ENCODE measurements at regions of chr7 and their contacts with region 1.

Region 1: DNA sequence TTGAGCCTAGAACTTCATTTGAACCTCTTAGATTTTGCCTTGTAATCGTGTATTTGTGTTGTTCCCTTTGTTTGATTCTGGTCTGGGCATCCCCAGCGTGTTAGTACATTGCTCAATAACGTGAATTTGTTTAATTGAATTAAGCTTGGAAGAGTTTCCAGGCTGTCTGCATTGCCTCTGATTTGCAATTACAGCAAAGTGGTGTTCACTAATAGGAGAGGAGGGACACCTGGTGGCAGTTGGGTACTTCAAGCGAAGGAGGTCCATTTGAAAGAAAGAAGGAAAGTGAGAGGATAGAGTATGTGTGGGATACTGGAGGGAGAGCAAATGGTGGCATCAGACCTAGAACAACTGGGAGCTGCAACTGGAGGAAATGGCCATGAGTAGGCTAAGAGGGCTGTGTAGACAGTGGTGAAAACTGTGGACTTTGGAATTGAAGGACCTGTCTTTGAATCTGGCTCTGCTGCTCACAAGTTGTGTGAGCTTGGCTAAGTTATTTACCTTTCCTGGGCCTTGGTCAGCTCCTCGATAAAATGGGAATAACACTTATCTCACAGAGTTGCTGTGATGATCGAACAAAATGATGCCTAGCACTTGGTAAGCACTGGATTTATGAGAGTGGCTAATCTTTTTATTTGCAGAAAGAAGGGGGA is 15.1 kb downstream of the LSMEM1 start:
- DNase-seq: peak in 2 of 3 donors; percentile 31 to 36
- H3K4me3 ChIP-seq: no peak overlapping the region
- H3K4me3 Mint-ChIP-seq: no peak overlapping the region
- H3K27ac ChIP-seq: no peak overlapping the region
- H3K27ac Mint-ChIP-seq: no peak overlapping the region
- H3K4me1 ChIP-seq: no peaks in the 10 kb centered on the region
- H3K4me1 Mint-ChIP-seq: peaks cover 5% of the 10 kb centered on the region
- H3K27me3 ChIP-seq: no peaks in the 10 kb centered on the region
- H3K27me3 Mint-ChIP-seq: peaks cover 3 to 10% (median 5%) of the 10 kb centered on the region in 3 donors
- CTCF ChIP-seq: peak; percentile 51

Region 2: GRCh38 chr7:111741811-111742240 is 754.1 kb before region 1 on chr7:
- intact Hi-C with region 1: loop called in 1 of 2 experiments (anchors 10 kb)
- DNase-seq: peak; percentile 18 to 46 (median 42)
- H3K4me3 ChIP-seq: no peak overlapping the region
- H3K4me3 Mint-ChIP-seq: no peak overlapping the region
- H3K27ac ChIP-seq: no peak overlapping the region
- H3K27ac Mint-ChIP-seq: no peak overlapping the region
- H3K4me1 ChIP-seq: no peaks in the 10 kb centered on the region
- H3K4me1 Mint-ChIP-seq: peaks cover 3% of the 10 kb centered on the region
- H3K27me3 ChIP-seq: no peaks in the 10 kb centered on the region
- H3K27me3 Mint-ChIP-seq: peaks cover 0 to 3% (median 2%) of the 10 kb centered on the region in 3 donors
- CTCF ChIP-seq: peak; percentile 76

Region 3: GRCh38 chr7:111785073-111785472 is 710.9 kb before region 1 on chr7:
- intact Hi-C with region 1: no loop called
- DNase-seq: no peak
- H3K4me3 ChIP-seq: no peak overlapping the region
- H3K4me3 Mint-ChIP-seq: no peak overlapping the region
- H3K27ac ChIP-seq: no peak overlapping the region
- H3K27ac Mint-ChIP-seq: no peak overlapping the region
- H3K4me1 ChIP-seq: no peaks in the 10 kb centered on the region
- H3K4me1 Mint-ChIP-seq: no peaks in the 10 kb centered on the region
- H3K27me3 ChIP-seq: no peaks in the 10 kb centered on the region
- H3K27me3 Mint-ChIP-seq: peaks cover 1 to 2% (median 1%) of the 10 kb centered on the region in 3 donors
- CTCF ChIP-seq: no peak

Region 4: GRCh38 chr7:112331492-112331891 is 164.4 kb before region 1 on chr7:
- intact Hi-C with region 1: no loop called
- DNase-seq: no peak
- H3K4me3 ChIP-seq: no peak overlapping the region
- H3K4me3 Mint-ChIP-seq: no peak overlapping the region
- H3K27ac ChIP-seq: no peak overlapping the region
- H3K27ac Mint-ChIP-seq: no peak overlapping the region
- H3K4me1 ChIP-seq: no peaks in the 10 kb centered on the region
- H3K4me1 Mint-ChIP-seq: no peaks in the 10 kb centered on the region
- H3K27me3 ChIP-seq: no peaks in the 10 kb centered on the region
- H3K27me3 Mint-ChIP-seq: no peaks in the 10 kb centered on the region
- CTCF ChIP-seq: no peak